ENCODE measurements at regions of chr3 and their contacts with region 1.

Region 1: DNA sequence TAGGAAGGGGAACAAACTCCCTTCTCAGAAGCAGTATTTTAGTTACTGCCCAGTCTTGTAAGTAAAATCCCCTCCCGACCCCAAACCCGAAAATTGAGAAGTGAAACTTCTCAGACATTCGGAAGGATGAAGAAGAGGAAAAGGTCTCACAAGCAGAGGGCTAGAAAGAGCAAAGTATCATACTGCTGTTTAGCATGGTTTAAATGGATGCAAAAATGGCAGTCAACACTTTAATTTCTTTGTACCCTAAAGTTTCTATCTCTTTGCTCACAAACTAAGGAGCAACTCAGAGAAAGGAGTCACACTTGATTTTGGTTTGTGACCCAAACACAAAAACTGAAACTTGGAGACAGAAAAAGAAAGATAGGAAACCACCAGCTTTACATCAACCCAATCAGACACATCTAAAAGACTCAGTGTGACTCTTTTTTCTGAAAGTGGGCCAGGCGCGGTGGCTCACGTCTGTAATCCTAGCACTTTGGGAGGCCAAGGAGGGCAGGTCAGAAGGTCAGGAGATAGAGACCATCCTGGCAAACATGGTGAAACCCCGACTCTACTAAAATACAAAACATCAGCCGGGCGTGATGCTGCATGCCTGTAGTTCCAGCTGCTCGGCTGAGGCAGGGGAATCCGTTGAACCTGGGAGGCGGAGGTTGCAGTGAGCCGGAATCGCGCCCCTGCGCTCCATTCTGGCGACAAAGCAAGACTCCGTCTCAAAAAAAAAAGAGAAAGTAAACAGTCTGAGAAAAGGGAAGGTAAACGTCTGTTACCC is 63.2 kb upstream of the ATP11B start:
- DNase-seq: no peak
- H3K4me3 ChIP-seq: no peak overlapping the region
- H3K27ac ChIP-seq: no peak overlapping the region
- H3K4me1 ChIP-seq: no peaks in the 10 kb centered on the region
- H3K27me3 ChIP-seq: peaks cover 4% of the 10 kb centered on the region
- CTCF ChIP-seq: no peak
- POLR2A ChIP-seq: no peak

Region 2: DNA sequence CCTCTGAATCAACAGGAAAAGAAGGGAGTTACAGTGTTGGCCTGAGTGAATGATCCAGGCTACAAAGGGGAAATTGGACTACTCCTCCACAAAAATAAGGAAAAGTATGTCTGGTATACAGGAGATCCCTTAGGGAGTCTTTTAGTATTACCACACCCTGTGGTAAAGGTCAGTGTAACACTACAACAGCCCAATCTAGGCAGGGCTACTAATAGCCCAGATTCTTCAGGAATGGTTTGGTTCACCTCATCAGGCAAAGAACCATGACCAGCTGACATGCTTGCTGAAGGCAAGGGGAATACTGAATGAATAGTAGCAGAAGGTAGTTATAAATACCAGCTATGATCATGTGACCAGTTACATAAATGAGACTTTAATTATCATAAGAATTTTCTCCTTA is 309.4 kb before region 1 on chr3:
- intact Hi-C with region 1: no loop called
- DNase-seq: no peak
- H3K4me3 ChIP-seq: no peak overlapping the region
- H3K27ac ChIP-seq: no peak overlapping the region
- H3K4me1 ChIP-seq: no peaks in the 10 kb centered on the region
- H3K27me3 ChIP-seq: no peaks in the 10 kb centered on the region
- CTCF ChIP-seq: no peak
- POLR2A ChIP-seq: no peak

Region 3: DNA sequence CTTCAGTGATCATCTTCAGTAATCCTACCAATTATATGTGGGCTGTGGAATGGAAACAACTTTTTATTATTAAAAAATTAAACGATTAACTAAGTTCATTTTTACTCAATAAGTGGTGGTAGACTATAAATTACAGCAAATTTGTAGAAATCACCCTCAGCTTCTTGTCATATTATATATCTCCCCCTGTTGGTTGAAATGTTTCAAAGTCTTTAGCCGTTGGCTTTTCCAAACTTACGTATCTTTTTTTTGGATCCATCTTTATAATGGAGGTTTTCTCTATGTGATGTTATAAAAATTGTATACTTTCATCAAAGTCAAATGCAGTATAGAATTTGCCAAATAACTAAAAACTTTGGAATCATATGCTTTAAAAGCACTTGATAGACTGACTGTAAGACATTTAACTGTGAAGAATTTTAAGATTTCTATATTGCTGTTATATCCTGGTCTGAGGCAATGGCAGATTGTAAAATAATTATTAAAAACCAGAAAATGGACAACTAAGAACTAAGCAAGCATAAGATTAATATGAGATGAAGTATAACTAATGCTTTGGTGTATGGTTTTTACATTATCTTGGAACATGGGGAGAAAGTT is 107.9 kb after region 1 on chr3:
- intact Hi-C with region 1: loop called in 1 of 2 experiments (anchors 5 kb)
- DNase-seq: no peak
- H3K4me3 ChIP-seq: no peak overlapping the region
- H3K27ac ChIP-seq: no peak overlapping the region
- H3K4me1 ChIP-seq: no peaks in the 10 kb centered on the region
- H3K27me3 ChIP-seq: no peaks in the 10 kb centered on the region
- CTCF ChIP-seq: peak; percentile 18 to 49 (median 35)
- POLR2A ChIP-seq: no peak